Gastrocnemius medialis (tissue), 4 donors: ENCODE measurements at regions of chr19 and their contacts with region 1.

Region 1: DNA sequence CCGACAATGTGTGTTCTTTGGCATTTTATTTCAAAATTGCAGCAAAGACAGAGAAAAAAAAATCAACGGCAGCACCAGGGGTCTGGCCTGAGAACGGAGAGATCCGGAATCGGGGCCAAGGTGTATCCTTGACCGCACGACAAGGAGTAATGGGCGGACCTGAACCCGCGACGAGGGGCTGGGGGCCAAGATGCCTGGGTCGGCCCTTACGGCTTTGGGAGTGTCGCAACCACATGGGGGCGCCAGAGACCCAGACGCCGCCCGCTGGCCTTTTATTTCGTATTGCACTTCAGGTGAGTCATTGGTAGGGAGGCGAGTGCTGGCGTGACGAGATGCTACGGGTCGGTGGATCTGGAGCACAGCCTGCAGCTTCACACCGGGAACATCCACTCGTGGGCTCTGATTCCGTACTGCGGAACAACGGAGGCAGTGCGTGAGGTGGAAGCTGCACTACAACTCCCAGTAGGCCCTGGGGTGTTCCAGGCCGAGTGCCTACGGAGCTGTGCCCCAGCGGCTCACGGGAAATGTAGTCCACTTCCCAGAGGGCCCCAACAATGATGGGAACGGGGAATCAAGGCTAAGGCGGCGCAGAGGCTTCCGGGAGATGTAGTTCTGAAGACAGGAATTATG is 15.7 kb downstream of the BCAT2 start:
- DNase-seq: peak; percentile 90 to 93
- ATAC-seq: peak; percentile 97 to 98
- H3K4me3 ChIP-seq: peak overlapping the region; percentile 46 to 56 (median 51)
- H3K27ac ChIP-seq: peak overlapping the region; percentile 83 to 90 (median 86)
- H3K4me1 ChIP-seq: peaks cover 0 to 4% of the 10 kb centered on the region in 2 donors
- H3K27me3 ChIP-seq: no peaks in the 10 kb centered on the region
- CTCF ChIP-seq: peak; percentile 98 to 99 (median 99)
- POLR2A ChIP-seq: no peak

Region 2: DNA sequence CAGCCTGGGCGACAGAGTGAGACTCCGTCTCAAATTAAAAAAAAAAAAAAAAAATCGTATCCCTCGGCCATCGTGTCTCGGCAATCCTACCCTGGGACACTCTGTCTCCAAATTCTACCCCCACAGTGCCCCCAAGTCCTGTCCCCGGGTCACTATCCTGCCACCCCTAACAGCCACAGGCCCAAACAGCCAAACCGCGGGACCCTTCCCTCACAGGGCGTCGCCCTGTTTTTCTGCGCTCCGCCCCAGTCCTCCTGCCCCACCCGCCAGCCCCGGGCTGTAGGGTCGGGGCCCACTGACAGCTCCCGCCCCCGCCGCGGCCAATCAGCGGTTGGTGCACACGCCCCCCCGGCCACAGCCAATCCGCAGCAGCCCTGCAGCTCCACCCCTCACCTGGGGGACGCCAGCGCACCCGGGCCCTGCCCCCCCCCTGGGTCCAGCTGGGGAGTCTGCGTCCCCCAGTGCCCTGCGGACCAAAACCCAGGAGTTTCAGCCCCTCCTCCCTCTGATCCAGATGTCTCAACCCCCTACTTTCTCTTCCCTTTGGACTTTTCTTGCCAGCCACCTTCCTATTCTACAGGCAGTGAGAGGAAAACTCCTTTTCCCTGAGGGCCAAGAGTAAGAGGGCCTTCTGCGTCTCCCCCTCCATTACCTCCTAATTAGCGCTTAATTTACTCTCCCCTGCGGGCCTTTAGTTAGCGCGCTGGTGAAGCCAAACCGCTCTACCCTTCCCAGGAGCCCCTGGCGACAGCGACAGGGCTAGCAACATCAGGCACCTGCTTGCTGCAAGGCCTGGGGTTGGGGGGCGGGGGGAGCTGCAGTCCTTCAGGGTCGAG is 17.1 kb after region 1 on chr19:
- in situ Hi-C with region 1: no loop called
- intact Hi-C with region 1: loop called (anchors 2 kb)
- DNase-seq: peak; percentile 86 to 95
- ATAC-seq: peak; percentile 59 to 62
- H3K4me3 ChIP-seq: peak overlapping the region; percentile 73 to 95 (median 80)
- H3K27ac ChIP-seq: peak overlapping the region; percentile 93 to 96 (median 94)
- H3K4me1 ChIP-seq: peaks cover 32 to 38% of the 10 kb centered on the region in 2 donors
- H3K27me3 ChIP-seq: no peaks in the 10 kb centered on the region
- CTCF ChIP-seq: no peak
- POLR2A ChIP-seq: peak; percentile 91 to 94

Region 3: GRCh38 chr19:48835734-48836088 is 40.5 kb after region 1 on chr19:
- in situ Hi-C with region 1: loop called (anchors 5 kb)
- intact Hi-C with region 1: loop called (anchors 1 kb)
- DNase-seq: peak; percentile 91 to 97
- ATAC-seq: peak; percentile 99 to 100
- H3K4me3 ChIP-seq: peak overlapping the region; percentile 24 to 42 (median 34)
- H3K27ac ChIP-seq: peak overlapping the region; percentile 65 to 72 (median 66)
- H3K4me1 ChIP-seq: peaks cover 0 to 7% of the 10 kb centered on the region in 2 donors
- H3K27me3 ChIP-seq: no peaks in the 10 kb centered on the region
- CTCF ChIP-seq: peak; percentile 91 to 99 (median 92)
- POLR2A ChIP-seq: peak; percentile 11 to 51

Region 4: DNA sequence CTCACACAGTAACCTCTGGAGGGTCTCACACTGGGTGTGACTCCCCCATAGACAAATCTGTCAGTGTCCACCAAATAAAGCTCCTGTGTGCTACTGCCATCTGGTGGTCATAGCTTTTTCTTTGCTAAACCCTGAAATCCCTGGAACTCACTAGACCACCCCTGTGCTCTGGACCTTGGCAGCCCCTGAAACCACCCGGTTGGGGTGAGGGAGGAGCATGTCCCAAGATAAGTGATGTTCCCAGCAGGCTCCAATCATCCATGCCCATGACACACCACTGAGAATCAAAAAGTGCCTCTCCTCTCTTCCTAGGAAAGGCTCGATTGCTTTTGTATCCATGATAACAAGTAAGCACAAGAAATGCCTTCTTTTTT is 47.6 kb after region 1 on chr19:
- in situ Hi-C with region 1: loop called in 3 of 4 experiments (anchors 5 kb)
- intact Hi-C with region 1: no loop called
- DNase-seq: peak in 1 of 2 donors; percentile 27
- ATAC-seq: peak; percentile 43 to 75
- H3K4me3 ChIP-seq: no peak overlapping the region
- H3K27ac ChIP-seq: no peak overlapping the region
- H3K4me1 ChIP-seq: no peaks in the 10 kb centered on the region
- H3K27me3 ChIP-seq: no peaks in the 10 kb centered on the region
- CTCF ChIP-seq: peak; percentile 70 to 93 (median 86)
- POLR2A ChIP-seq: no peak

Region 5: GRCh38 chr19:48965040-48965805 is 170.1 kb after region 1 on chr19 and contains the start of gene FTL:
- in situ Hi-C with region 1: no loop called
- intact Hi-C with region 1: loop called (anchors 5 kb)
- DNase-seq: peak; percentile 97 to 98
- ATAC-seq: peak; percentile 66 to 67
- H3K4me3 ChIP-seq: peak within 1 kb of the TSS; percentile 95 to 97 (median 96)
- H3K27ac ChIP-seq: peak within 1 kb of the TSS; percentile 89 to 99 (median 98)
- H3K4me1 ChIP-seq: peaks cover 30 to 48% of the 10 kb centered on the region in 2 donors
- H3K27me3 ChIP-seq: no peaks in the 10 kb centered on the region
- CTCF ChIP-seq: no peak
- POLR2A ChIP-seq: peak; percentile 99 to 100
- total RNA-seq, gene FTL: 894 to 1,364 (median 1,121) TPM

Region 6: DNA sequence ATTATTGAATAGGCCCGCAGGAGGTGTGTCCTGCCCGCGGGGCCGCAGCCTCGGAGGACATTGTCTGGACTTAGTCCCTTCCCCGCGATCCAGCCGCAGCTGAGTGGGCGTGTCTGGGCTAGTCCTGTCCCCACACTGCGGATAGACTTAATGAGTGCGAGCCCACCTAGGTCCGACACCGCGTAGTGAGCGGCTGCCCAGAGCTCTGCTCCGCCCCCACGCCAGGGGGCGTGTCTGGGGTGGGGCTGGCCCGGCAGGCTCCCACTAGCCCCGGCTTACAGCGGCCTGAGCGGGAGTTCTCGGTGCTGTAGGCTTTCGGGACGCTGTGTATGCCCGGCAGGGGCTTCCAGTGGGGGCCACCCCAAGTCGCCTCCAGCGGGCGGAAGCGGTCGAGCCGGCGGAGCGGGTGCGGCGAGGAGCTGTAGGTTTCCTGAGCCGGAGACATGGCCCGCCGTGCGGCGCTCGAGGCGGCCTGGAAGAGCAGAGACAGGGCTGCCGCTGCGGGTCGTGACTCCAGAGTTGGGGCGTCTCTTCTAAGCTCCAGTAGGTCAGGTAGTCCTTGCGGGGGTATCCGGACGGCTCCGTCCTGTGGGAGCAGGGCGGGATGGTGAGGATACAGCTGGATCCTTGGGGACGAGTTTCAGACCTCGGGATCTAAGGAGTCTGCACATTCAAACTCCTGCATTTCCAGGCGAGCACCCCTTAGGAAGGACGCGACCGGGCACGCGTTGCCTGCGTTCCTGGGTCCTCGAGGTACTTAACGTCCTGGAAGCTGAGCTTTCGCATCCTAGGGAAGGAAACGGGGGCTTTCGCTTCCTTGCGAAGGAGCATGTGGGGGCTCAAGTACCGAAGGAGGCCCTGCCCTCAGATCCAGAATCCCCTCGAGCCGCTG is 261.1 kb after region 1 on chr19:
- in situ Hi-C with region 1: no loop called
- intact Hi-C with region 1: loop called (anchors 5 kb)
- DNase-seq: peak in 1 of 2 donors; percentile 43
- ATAC-seq: peak; percentile 66 to 74
- H3K4me3 ChIP-seq: peak overlapping the region; percentile 49 to 77 (median 68)
- H3K27ac ChIP-seq: peak overlapping the region; percentile 64 to 74 (median 67)
- H3K4me1 ChIP-seq: peaks cover 6 to 23% of the 10 kb centered on the region in 2 donors
- H3K27me3 ChIP-seq: no peaks in the 10 kb centered on the region
- CTCF ChIP-seq: peak; percentile 13 to 70 (median 65)
- POLR2A ChIP-seq: peak in 1 of 2 donors; percentile 33